ENCODE measurements at regions of chr5 and their contacts with region 1.

Region 1: DNA sequence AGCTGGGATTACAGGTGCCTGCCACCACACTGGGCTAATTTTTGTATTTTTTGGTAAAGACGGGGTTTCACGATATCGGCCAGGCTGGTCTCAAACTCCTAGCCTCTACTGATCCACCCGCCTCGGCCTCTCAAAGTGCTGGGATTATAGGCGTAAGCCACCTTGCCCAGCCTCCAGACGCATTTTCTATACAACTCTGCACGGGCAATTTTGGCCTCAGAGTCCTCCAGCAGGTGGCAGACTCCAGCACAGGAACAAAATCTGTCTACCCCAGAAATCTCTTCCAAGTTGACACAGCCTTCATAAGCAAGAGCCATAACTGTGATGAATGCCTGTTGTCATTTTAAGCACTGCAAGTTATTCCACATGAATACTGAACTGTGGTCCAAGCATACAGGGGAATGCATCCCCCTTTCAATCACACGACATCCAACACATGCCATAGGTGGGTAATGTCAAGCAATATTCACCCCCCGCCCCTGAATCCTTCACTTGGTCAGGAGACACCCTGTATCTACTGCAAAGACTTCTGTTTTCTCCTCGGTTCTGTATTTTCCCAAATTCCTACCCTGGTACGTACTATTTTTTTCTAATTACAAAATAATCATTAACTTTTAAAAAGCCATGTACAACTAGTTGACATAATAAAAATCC is 50.8 kb downstream of the ALDH7A1 start:
- DNase-seq: no peak
- H3K4me3 Mint-ChIP-seq: no peak overlapping the region
- H3K27ac Mint-ChIP-seq: no peak overlapping the region
- H3K4me1 Mint-ChIP-seq: no peaks in the 10 kb centered on the region
- H3K27me3 Mint-ChIP-seq: peaks cover 2% of the 10 kb centered on the region

Region 2: GRCh38 chr5:126339215-126339805 is 204.9 kb before region 1 on chr5:
- intact Hi-C with region 1: loop called (anchors 1 kb)
- DNase-seq: peak; percentile 20
- H3K4me3 Mint-ChIP-seq: no peak overlapping the region
- H3K27ac Mint-ChIP-seq: no peak overlapping the region
- H3K4me1 Mint-ChIP-seq: no peaks in the 10 kb centered on the region
- H3K27me3 Mint-ChIP-seq: peaks cover 9% of the 10 kb centered on the region

Region 3: GRCh38 chr5:126354012-126354857 is 190.0 kb before region 1 on chr5:
- intact Hi-C with region 1: loop called (anchors 1 kb)
- DNase-seq: no peak
- H3K4me3 Mint-ChIP-seq: no peak overlapping the region
- H3K27ac Mint-ChIP-seq: no peak overlapping the region
- H3K4me1 Mint-ChIP-seq: peaks cover 6% of the 10 kb centered on the region
- H3K27me3 Mint-ChIP-seq: peaks cover 18% of the 10 kb centered on the region

Region 4: DNA sequence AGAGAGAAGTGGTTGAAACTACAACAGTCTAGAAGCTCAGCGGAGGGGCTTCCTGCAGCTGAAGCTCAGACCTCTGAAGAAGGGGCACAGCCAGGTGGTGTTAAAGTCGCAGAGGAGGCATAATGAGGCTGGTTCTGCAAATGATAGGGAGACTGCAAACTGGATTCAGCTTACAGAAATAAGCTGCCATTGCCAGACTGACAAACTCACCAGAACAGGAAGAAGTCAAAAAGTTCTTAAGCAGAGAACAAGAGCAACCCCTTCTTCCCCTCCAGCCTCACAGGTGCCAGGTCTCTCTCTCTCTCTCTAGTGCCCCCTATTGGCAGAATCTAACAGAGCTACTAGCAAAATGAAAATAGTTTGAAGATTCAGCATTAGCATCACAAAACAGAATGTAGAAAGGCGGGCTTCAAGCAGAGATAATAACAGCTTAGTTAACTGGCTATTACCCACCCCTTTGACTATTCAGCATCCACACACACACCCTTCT is 44.3 kb before region 1 on chr5:
- intact Hi-C with region 1: loop called (anchors 1 kb)
- DNase-seq: peak; percentile 11
- H3K4me3 Mint-ChIP-seq: no peak overlapping the region
- H3K27ac Mint-ChIP-seq: no peak overlapping the region
- H3K4me1 Mint-ChIP-seq: peaks cover 4% of the 10 kb centered on the region
- H3K27me3 Mint-ChIP-seq: no peaks in the 10 kb centered on the region

Region 5: GRCh38 chr5:127492854-127493738 is 948.9 kb after region 1 on chr5:
- intact Hi-C with region 1: loop called (anchors 2 kb)
- DNase-seq: no peak
- H3K4me3 Mint-ChIP-seq: no peak overlapping the region
- H3K27ac Mint-ChIP-seq: no peak overlapping the region
- H3K4me1 Mint-ChIP-seq: no peaks in the 10 kb centered on the region
- H3K27me3 Mint-ChIP-seq: peaks cover 34% of the 10 kb centered on the region